MCF 10A (cell line): ENCODE measurements at regions of chr12 and their contacts with region 1.

Region 1: GRCh38 chr12:103548622-103549601 is 38.2 kb upstream of the STAB2 start:
- DNase-seq: peak; percentile 82
- H3K4me3 Mint-ChIP-seq: no peak overlapping the region
- H3K27ac Mint-ChIP-seq: no peak overlapping the region
- H3K4me1 Mint-ChIP-seq: no peaks in the 10 kb centered on the region
- H3K27me3 Mint-ChIP-seq: no peaks in the 10 kb centered on the region
- CTCF ChIP-seq: peak; percentile 93

Region 2: DNA sequence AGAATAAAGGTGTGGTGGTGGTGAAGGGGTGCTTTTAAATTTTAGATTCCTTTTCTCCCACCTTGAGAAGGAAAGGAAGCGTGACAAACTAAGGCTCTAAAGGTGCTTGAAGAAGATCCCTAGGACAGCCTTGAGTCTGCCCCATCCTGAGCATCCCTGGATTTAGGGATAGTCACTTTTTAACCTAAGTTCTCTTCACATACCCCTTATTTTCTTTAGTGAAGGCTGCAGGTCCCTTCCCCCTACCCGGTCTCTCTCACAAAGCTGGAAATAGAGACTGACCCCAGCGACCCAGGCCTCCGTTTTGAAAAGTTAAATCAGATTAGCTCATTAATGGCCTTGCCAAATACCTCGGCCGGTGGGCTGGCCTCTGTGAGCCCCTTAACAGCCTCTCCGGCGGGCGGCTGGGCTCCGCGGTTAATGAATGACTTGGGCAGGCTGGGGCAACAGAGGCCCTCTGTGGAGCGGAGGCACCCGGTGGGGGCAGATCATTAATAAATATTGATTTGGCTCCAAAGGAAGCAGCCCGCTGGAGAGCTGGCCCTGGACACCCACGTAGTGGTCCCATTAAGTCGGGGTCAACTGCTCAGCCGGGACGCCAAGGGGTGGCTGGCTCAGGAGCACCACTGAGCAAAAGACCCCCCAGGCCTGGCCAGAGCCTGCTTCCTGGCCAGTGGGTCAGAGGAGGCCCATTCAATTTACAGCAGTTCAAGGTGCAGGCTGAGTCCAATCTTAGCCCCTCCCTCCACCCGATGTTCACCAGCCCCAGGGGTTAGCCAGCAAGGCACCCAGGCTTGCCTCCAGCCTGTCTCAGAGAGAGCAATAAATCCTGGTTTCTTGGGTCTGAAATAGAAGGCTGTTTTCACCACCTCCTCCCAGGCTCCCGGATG is 663.6 kb before region 1 on chr12:
- CTCF ChIA-PET with region 1: interaction called, 169 read pairs
- POLR2A ChIA-PET with region 1: no interaction called
- intact Hi-C with region 1: loop called (anchors 1 kb)
- DNase-seq: no peak
- H3K4me3 Mint-ChIP-seq: no peak overlapping the region
- H3K27ac Mint-ChIP-seq: no peak overlapping the region
- H3K4me1 Mint-ChIP-seq: no peaks in the 10 kb centered on the region
- H3K27me3 Mint-ChIP-seq: peaks cover 54% of the 10 kb centered on the region
- CTCF ChIP-seq: no peak

Region 3: DNA sequence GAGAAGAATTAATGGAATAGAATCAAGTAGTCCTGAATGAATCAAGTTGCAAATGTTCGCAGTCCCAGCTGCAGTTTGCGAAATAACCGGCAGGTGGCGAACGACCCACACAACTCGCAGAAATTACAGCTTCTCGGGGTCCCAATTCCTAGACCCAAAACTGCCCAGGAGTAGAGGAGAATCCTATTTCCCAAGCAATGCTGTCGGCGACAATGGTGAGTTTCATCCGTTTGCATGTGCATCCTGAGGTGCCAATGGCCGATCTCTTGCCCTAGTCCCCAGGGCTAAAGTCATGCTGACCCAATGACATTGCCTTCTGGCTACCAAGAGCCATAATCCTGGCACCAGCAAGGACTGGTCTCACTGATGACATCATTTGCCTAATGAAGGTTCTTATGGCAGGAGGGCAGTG is 600.0 kb before region 1 on chr12:
- CTCF ChIA-PET with region 1: interaction called, 157 read pairs
- POLR2A ChIA-PET with region 1: no interaction called
- intact Hi-C with region 1: loop called (anchors 1 kb)
- DNase-seq: peak; percentile 42
- H3K4me3 Mint-ChIP-seq: no peak overlapping the region
- H3K27ac Mint-ChIP-seq: no peak overlapping the region
- H3K4me1 Mint-ChIP-seq: no peaks in the 10 kb centered on the region
- H3K27me3 Mint-ChIP-seq: peaks cover 20% of the 10 kb centered on the region
- CTCF ChIP-seq: peak; percentile 93

Region 4: DNA sequence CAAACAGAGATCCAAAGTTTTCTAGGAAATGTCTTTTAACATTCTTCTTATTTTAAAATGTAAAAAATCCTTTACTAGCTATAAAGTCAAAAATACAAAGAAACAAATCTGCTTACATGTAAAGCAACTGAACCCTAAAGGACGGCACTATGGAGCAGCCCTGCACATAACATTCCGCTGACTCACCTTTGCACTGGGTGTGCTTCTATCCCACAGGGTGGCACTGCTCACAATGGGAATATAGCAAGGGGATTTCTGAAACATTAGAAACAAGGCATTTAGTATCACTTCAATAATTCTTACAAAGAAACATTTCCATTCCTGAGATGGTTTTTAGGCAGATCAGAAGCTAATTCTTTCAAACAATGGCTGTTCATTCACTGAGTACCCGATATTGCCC is 147.5 kb before region 1 on chr12:
- CTCF ChIA-PET with region 1: interaction called, 34 read pairs
- POLR2A ChIA-PET with region 1: no interaction called
- intact Hi-C with region 1: loop called (anchors 1 kb)
- DNase-seq: peak; percentile 60
- H3K4me3 Mint-ChIP-seq: no peak overlapping the region
- H3K27ac Mint-ChIP-seq: no peak overlapping the region
- H3K4me1 Mint-ChIP-seq: peaks cover 5% of the 10 kb centered on the region
- H3K27me3 Mint-ChIP-seq: no peaks in the 10 kb centered on the region
- CTCF ChIP-seq: peak; percentile 14

Region 5: DNA sequence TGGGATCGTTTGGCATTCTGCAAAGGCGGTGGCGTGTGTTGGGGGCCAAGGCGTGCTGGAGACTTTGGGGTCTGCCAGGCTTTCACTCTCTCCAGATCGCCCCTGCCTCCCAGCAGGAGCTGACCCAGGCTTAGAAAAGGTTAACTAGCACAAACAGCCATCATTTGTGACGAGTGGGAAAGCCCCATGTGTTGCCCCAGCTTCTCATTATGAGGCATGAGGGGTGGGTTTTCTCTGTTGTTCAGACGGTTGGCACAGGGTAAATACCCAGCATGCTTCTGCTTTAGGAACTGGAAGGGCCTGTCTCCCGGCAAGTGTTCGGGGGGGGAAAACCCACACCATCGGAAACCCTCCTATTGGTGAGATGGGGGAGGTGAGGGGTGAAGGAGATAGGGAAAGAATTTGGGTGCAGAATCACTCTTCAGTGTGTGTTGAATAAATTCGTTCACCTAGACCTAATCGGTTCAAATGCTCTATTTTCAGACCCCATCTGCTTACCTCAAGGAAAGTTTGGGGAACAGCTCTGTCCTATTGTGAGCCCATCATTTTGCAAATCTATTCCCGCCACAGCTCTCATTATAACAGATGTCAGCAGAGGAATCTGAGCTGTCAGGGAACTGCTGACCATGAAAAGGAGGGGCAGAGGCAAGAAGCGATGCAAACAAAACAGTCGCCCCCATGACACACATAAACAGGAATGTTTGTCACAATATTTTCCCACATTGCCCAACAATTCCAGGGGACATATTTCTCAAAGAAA is 18.4 kb before region 1 on chr12:
- CTCF ChIA-PET with region 1: interaction called, 93 read pairs
- POLR2A ChIA-PET with region 1: no interaction called
- intact Hi-C with region 1: no loop called
- DNase-seq: no peak
- H3K4me3 Mint-ChIP-seq: no peak overlapping the region
- H3K27ac Mint-ChIP-seq: no peak overlapping the region
- H3K4me1 Mint-ChIP-seq: no peaks in the 10 kb centered on the region
- H3K27me3 Mint-ChIP-seq: no peaks in the 10 kb centered on the region
- CTCF ChIP-seq: no peak

Region 6: DNA sequence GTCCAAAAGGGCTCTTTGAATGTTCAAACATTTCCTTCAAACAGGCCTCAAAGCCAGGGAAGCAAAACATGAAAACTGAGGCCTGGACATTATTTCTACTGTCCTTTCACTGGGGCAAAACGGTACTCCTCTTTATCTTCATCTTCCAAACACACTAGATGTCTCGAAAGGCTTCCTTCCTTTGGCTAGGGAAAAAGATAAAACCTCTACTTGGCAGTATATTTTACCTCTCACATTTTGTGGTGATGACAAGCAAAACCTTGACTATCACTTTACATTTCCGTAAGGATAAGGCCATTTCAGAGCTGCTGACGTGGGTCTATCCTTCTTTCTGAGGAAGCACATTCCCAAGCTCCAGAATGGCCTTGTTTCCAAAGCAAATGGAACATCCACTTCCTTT is 48.1 kb after region 1 on chr12:
- CTCF ChIA-PET with region 1: no interaction called
- POLR2A ChIA-PET with region 1: no interaction called
- intact Hi-C with region 1: no loop called
- DNase-seq: no peak
- H3K4me3 Mint-ChIP-seq: no peak overlapping the region
- H3K27ac Mint-ChIP-seq: no peak overlapping the region
- H3K4me1 Mint-ChIP-seq: no peaks in the 10 kb centered on the region
- H3K27me3 Mint-ChIP-seq: peaks cover 12% of the 10 kb centered on the region
- CTCF ChIP-seq: no peak